ENCODE measurements at regions of chr5 and their contacts with region 1.

Region 1: DNA sequence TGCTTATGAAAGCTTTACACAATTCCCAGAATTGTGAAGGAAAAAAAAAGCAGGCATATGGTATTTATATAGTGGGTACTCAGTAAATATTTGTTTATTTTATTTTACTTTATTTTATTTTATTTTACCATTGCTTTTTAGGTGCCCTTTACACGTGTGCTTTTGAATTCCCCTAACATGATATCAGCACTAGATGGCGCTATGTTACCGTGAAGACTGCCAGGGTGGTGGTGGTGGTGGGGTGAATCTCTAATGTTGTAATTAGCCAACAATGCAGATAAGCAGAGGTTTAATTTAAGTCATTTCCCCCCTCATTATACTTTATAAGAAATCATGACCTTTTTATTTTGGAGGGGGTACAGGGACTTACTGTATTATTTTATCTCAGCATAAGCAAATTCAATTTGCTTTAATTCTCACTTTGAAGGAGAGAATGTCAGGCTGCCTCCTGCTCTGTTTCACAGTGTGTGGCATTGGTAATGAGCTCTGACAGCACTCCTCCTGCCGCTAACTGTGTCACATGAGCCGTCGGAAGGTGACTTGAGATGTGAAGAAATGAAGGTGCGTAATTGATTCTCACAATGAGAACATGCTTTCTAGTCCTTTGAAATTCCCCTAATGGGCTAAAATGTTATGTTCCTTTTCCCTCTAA is 165.6 kb downstream of the YTHDC2 start:
- DNase-seq: peak; percentile 55
- H3K4me3 ChIP-seq: no peak overlapping the region
- H3K27ac ChIP-seq: no peak overlapping the region
- H3K4me1 ChIP-seq: no peaks in the 10 kb centered on the region
- H3K27me3 ChIP-seq: peaks cover 0 to 2% of the 10 kb centered on the region in 2 experiments
- CTCF ChIP-seq: peak; percentile 58 to 64
- POLR2A ChIP-seq: no peak

Region 2: DNA sequence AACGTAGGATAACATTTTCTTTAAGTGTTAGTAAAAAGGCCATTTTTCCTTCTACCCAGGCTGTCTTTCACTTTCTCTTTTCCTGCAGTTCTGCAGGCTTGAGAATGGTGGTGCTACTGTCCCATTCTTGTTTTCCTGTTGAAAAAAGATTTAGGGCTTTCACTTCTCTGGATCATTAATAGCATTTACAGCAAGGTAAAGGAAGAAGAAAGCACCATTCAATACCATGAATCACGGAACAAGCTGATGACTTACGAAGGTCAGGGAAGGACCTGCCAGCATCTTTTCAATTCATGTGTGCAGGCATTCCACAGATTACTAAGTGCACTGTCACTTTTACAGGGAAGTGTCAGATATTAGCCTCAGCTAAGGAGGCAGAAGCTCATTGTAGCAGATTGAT is 127.2 kb after region 1 on chr5:
- CTCF ChIA-PET with region 1: interaction called, 4 read pairs
- POLR2A ChIA-PET with region 1: no interaction called
- dilution Hi-C with region 1: no loop called
- intact Hi-C with region 1: loop called (anchors 5 kb)
- DNase-seq: peak; percentile 71
- H3K4me3 ChIP-seq: peak overlapping the region in 1 of 3 experiments; percentile 24
- H3K27ac ChIP-seq: peak overlapping the region; percentile 2
- H3K4me1 ChIP-seq: peaks cover 14% of the 10 kb centered on the region
- H3K27me3 ChIP-seq: no peaks in the 10 kb centered on the region
- CTCF ChIP-seq: peak; percentile 34 to 38
- POLR2A ChIP-seq: no peak

Region 3: GRCh38 chr5:113817677-113818076 is 138.6 kb after region 1 on chr5:
- CTCF ChIA-PET with region 1: no interaction called
- POLR2A ChIA-PET with region 1: no interaction called
- dilution Hi-C with region 1: no loop called
- intact Hi-C with region 1: no loop called
- DNase-seq: no peak
- H3K4me3 ChIP-seq: no peak overlapping the region
- H3K27ac ChIP-seq: no peak overlapping the region
- H3K4me1 ChIP-seq: no peaks in the 10 kb centered on the region
- H3K27me3 ChIP-seq: peaks cover 0 to 2% of the 10 kb centered on the region in 2 experiments
- CTCF ChIP-seq: no peak
- POLR2A ChIP-seq: no peak

Region 4: DNA sequence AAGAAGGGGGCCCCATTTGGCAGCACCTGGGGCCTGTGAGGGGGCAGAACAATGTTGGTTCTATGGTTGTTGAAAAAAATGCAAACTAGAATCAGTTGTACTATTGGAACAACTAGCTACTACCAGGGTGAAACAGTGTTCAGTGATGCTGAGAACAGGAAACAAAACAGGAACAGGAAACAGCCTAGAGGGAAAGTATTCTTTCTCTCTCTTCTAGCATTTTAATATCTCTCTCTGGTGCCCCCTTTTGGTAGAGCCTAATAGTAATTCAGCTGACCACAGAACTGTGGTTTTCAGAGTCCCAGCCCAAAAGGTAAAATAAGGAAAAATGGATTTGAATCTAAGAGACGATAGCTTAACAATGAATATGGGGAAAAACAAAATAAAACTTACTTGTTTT is 544.8 kb after region 1 on chr5:
- CTCF ChIA-PET with region 1: no interaction called
- POLR2A ChIA-PET with region 1: no interaction called
- dilution Hi-C with region 1: no loop called
- intact Hi-C with region 1: loop called (anchors 1 kb)
- DNase-seq: peak; percentile 53
- H3K4me3 ChIP-seq: no peak overlapping the region
- H3K27ac ChIP-seq: no peak overlapping the region
- H3K4me1 ChIP-seq: no peaks in the 10 kb centered on the region
- H3K27me3 ChIP-seq: no peaks in the 10 kb centered on the region
- CTCF ChIP-seq: peak; percentile 41 to 53
- POLR2A ChIP-seq: no peak

Region 5: GRCh38 chr5:114361724-114362196 is 682.7 kb after region 1 on chr5 and contains the start of gene KCNN2:
- CTCF ChIA-PET with region 1: interaction called, 14 read pairs
- POLR2A ChIA-PET with region 1: no interaction called
- dilution Hi-C with region 1: no loop called
- intact Hi-C with region 1: loop called (anchors 1 kb)
- DNase-seq: peak; percentile 71
- H3K4me3 ChIP-seq: peak within 1 kb of the TSS; percentile 13 to 49 (median 28)
- H3K27ac ChIP-seq: no peak within 1 kb of the TSS
- H3K4me1 ChIP-seq: peaks cover 8% of the 10 kb centered on the region
- H3K27me3 ChIP-seq: peaks cover 37 to 66% of the 10 kb centered on the region in 2 experiments
- CTCF ChIP-seq: no peak
- POLR2A ChIP-seq: no peak
- total RNA-seq, gene KCNN2: 1.3 and 1.9 TPM in 2 replicates

Region 6: DNA sequence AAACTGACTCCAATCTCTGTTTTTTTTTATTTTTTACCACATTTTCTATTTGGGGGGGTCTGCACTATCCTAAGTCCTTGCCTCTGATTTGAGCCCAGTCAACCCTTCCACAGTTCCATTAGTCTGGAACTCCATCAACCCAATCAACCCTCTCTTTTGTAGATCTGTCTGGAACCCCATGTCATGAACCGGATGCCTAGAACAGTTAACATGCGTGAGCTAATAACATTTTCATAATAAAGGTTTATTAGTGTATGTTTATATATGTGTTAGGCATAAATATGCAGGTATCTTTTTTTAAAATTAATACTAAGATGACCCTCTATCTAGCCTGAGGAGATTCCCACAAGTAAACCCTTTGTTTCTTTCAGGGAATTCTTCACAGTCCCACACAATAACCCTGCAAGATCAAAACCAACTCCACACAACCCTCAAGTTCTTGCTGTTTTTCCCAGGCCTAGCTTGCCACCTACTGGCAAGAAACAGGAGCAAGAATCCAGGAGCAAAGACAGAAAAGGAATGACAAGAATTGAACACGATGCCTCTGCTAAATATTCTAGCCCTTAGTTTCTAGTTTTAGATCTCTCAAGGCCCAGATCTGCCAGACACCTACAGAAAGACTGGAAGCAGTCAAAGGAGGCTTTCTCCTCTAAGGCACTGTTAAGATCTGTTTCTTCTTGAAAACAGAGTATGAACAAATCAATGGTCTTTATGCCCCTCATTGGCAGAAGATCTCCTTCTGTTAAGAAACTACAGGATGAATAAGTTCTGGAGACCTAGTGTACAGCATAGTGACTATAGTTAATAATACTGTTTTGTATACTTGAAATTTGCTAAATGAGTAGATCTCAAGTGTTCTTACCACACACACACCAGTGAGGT is 1390.3 kb after region 1 on chr5:
- CTCF ChIA-PET with region 1: interaction called, 24 read pairs
- POLR2A ChIA-PET with region 1: no interaction called
- dilution Hi-C with region 1: no loop called
- intact Hi-C with region 1: loop called (anchors 1 kb)
- DNase-seq: peak; percentile 32
- H3K4me3 ChIP-seq: no peak overlapping the region
- H3K27ac ChIP-seq: no peak overlapping the region
- H3K4me1 ChIP-seq: no peaks in the 10 kb centered on the region
- H3K27me3 ChIP-seq: no peaks in the 10 kb centered on the region
- CTCF ChIP-seq: peak; percentile 41 to 52
- POLR2A ChIP-seq: no peak

Measured in endothelial cell of umbilical vein (primary cell).